OCI-LY7 (cell line): ENCODE measurements at regions of chr9 and their contacts with region 1.

Region 1: GRCh38 chr9:109903515-109904138 is 123.6 kb downstream of the PALM2AKAP2 start:
- DNase-seq: peak; percentile 92
- H3K4me3 ChIP-seq: no peak overlapping the region
- H3K27ac ChIP-seq: peak overlapping the region; percentile 98
- H3K4me1 ChIP-seq: peaks cover 57% of the 10 kb centered on the region
- CTCF ChIP-seq: peak; percentile 99

Region 2: DNA sequence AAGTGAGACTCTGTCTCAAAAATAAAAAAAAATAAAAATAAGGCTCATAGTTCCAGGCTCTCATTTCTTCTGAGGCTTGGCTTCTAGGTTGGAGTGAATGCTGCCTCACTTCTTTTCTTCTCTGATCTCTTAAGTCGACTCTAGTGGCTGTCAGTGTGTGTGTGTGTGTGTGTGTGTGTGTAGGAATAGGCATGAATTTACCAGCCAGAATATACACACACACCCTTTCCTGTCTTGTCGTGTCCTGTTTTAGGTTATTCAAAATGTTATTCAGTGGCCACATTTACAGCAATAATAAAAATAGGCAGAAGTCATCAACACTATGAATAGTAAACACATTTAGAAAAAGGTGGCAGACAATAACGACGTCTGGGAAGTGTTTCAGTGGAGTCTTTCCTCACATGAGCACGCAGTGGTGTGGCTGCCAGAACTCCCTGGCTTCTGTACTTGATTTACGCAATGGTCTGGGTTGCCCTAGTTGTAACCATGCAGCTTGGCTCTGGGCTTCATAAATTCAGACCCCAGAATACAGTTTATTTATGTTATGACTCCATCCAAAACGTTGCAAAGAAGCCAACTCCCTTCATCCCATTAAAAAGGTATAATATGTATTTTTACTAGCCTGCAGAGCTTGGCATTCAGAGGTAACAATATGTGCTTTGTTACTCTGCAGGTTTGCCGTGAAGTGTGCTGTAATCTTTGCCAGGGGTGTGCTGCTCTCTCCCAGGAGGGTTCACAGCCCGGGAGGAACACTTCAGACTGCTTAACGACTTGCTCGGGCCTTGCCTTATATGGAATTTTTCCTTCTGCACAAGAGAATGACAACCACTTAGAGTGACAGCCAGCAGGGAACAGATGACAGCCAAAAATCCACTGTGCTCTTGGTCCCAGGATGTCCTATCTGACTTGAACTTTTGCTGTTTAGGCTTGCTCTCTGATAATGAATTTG is 158.0 kb before region 1 on chr9:
- CTCF ChIA-PET with region 1: no interaction called
- POLR2A ChIA-PET with region 1: no interaction called
- intact Hi-C with region 1: no loop called
- DNase-seq: no peak
- H3K4me3 ChIP-seq: no peak overlapping the region
- H3K27ac ChIP-seq: no peak overlapping the region
- H3K4me1 ChIP-seq: no peaks in the 10 kb centered on the region
- CTCF ChIP-seq: no peak

Region 3: GRCh38 chr9:109887079-109887478 is 16.5 kb before region 1 on chr9:
- CTCF ChIA-PET with region 1: no interaction called
- POLR2A ChIA-PET with region 1: no interaction called
- intact Hi-C with region 1: no loop called
- DNase-seq: no peak
- H3K4me3 ChIP-seq: no peak overlapping the region
- H3K27ac ChIP-seq: no peak overlapping the region
- H3K4me1 ChIP-seq: no peaks in the 10 kb centered on the region
- CTCF ChIP-seq: no peak

Region 4: DNA sequence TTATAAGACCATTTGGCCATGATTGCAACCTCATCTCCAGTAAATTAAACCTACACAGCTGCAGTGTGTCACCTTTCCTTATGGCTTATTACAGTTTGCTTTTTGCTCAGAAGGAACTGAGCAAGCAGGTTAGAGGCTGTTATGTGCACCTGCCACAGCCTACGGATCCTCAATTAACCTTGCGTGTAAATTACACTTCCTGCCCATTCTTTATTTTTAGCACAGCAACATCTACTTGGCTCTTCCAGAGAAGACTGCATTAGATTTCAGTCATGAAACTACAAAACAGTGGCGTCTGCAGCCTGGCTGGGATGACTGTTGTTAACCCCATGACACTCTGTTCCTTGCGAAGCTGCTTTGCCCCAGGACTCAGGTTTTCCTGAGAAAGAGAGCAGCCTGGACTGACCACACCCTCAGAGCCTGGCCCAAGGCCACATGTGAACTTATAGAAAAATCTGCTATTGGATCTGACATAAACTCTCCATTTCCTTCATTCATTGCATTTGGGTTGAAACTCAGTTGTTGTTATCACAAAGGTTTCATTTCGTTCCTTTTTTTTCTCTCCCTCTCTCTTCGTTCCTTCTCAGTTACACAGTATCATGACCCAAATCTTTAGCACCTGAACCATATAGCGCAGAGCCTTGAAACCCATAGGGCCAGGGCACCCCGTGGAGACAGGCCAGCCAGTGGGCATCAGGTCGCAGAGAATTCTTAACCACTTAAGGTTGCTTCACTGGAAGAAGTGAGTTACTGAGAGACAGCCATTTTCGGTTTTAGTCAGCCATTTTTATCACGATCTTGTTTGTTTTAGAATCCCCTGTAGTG is 14.9 kb after region 1 on chr9:
- CTCF ChIA-PET with region 1: interaction called, 3 read pairs
- POLR2A ChIA-PET with region 1: interaction called, 80 read pairs
- intact Hi-C with region 1: loop called (anchors 1 kb)
- DNase-seq: peak; percentile 96
- H3K4me3 ChIP-seq: peak overlapping the region; percentile 49
- H3K27ac ChIP-seq: peak overlapping the region; percentile 98
- H3K4me1 ChIP-seq: peaks cover 97% of the 10 kb centered on the region
- CTCF ChIP-seq: no peak

Region 5: DNA sequence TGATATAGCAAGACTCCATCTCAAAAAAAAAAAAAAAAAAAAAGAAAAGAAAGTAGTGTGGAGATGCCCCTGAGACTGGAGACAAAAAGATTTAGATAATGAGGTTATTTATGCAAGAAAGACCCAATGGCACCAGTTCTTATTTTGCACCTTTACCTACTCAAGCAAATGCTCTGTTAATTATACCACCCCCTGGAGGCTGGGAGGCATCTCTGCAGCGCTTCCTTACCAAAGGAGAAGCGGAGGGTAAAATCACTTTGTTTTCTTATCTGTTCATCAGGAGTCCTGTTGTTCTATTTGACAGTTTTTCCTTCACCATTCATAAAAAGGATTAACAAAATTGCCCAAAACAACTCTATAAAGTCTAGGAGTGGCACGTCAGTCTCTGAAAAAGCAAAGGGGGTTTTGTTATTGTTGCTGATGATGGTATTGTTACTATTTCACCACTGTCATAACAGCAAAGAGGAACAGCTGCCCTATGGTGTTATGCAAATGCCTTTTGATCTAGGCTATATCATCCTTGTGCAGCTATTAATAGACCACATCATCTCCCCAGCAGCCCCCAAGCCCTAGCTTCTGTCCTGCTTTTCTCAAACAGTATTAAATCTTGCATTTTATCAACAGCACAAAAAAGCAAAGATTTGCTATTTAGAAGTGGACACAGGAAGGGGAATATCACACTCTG is 50.3 kb after region 1 on chr9:
- CTCF ChIA-PET with region 1: interaction called, 4 read pairs
- POLR2A ChIA-PET with region 1: interaction called, 12 read pairs
- intact Hi-C with region 1: no loop called
- DNase-seq: peak; percentile 83
- H3K4me3 ChIP-seq: peak overlapping the region; percentile 39
- H3K27ac ChIP-seq: peak overlapping the region; percentile 86
- H3K4me1 ChIP-seq: peaks cover 98% of the 10 kb centered on the region
- CTCF ChIP-seq: peak; percentile 90

Region 6: GRCh38 chr9:110048403-110048975 is 144.9 kb after region 1 on chr9:
- CTCF ChIA-PET with region 1: interaction called, 6 read pairs
- POLR2A ChIA-PET with region 1: interaction called, 42 read pairs
- intact Hi-C with region 1: loop called (anchors 1 kb)
- DNase-seq: peak; percentile 88
- H3K4me3 ChIP-seq: peak overlapping the region; percentile 86
- H3K27ac ChIP-seq: peak overlapping the region; percentile 53
- H3K4me1 ChIP-seq: peaks cover 47% of the 10 kb centered on the region
- CTCF ChIP-seq: no peak

Region 7: GRCh38 chr9:110099236-110100095 is 195.8 kb after region 1 on chr9:
- CTCF ChIA-PET with region 1: interaction called, 3 read pairs
- POLR2A ChIA-PET with region 1: interaction called, 14 read pairs
- intact Hi-C with region 1: no loop called
- DNase-seq: peak; percentile 47
- H3K4me3 ChIP-seq: peak overlapping the region; percentile 4
- H3K27ac ChIP-seq: peak overlapping the region; percentile 79
- H3K4me1 ChIP-seq: peaks cover 67% of the 10 kb centered on the region
- CTCF ChIP-seq: peak; percentile 47

Region 8: GRCh38 chr9:110143950-110144545 is 240.4 kb after region 1 on chr9:
- CTCF ChIA-PET with region 1: interaction called, 9 read pairs
- POLR2A ChIA-PET with region 1: interaction called, 215 read pairs
- intact Hi-C with region 1: loop called (anchors 1 kb)
- DNase-seq: peak; percentile 87
- H3K4me3 ChIP-seq: peak overlapping the region; percentile 50
- H3K27ac ChIP-seq: peak overlapping the region; percentile 97
- H3K4me1 ChIP-seq: peaks cover 83% of the 10 kb centered on the region
- CTCF ChIP-seq: peak; percentile 54; the same call in 1 of the 2 replicates

Region 9: DNA sequence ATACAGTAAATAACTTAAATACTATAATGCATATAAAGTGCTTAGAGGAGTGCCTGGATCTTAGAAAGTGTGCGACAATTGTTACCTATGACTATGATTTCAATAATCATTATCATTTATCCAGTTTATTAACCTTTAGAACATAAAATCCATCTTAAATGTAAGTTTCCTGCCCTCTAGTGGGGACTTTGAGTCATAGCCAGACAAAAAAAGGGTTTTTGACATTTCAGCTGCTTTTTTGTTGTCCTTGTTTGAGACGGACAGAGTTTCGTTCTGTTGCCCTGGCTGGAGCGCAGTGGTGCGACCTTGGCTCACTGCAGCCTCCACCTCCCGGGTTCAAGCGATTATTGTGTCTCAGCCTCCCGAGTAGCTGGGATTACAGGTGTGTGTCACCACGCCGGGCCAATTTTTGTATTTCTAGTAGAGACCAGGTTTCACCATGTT is 314.1 kb after region 1 on chr9:
- CTCF ChIA-PET with region 1: no interaction called
- POLR2A ChIA-PET with region 1: interaction called, 3 read pairs
- intact Hi-C with region 1: loop called (anchors 1 kb)
- DNase-seq: peak; percentile 69
- H3K4me3 ChIP-seq: no peak overlapping the region
- H3K27ac ChIP-seq: no peak overlapping the region
- H3K4me1 ChIP-seq: peaks cover 13% of the 10 kb centered on the region
- CTCF ChIP-seq: peak; percentile 91